ENCODE measurements at regions of chrX and their contacts with region 1.

Region 1: GRCh38 chrX:123422877-123423276 is 238.8 kb downstream of the GRIA3 start:
- DNase-seq: no peak
- ATAC-seq: peak; percentile 75
- H3K4me3 ChIP-seq: no peak overlapping the region
- H3K27ac ChIP-seq: no peak overlapping the region
- H3K4me1 ChIP-seq: peaks cover 0 to 6% of the 10 kb centered on the region in 2 donors
- H3K27me3 ChIP-seq: no peaks in the 10 kb centered on the region

Region 2: DNA sequence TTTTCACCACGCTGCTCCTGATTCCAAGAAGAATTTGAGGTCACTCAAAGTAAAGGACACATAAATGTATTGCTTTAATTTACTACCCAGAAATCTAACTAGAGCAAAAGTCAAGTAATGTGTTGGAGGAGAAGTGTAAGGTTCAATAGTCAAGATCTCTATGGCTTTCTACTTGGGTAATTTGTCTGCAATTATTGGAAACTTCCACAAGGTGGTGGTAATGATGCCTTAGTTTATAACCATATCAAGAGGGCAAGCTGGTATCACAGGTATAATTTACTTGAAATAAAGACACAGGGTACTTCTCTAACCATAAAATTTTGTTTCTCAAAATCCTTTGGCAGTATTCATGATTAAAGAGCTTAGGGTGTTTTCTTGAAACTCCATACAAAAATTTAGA is 249.0 kb before region 1 on chrX:
- intact Hi-C with region 1: loop called in 1 of 2 experiments (anchors 5 kb)
- DNase-seq: no peak
- ATAC-seq: no peak
- H3K4me3 ChIP-seq: no peak overlapping the region
- H3K27ac ChIP-seq: no peak overlapping the region
- H3K4me1 ChIP-seq: no peaks in the 10 kb centered on the region
- H3K27me3 ChIP-seq: no peaks in the 10 kb centered on the region

Region 3: DNA sequence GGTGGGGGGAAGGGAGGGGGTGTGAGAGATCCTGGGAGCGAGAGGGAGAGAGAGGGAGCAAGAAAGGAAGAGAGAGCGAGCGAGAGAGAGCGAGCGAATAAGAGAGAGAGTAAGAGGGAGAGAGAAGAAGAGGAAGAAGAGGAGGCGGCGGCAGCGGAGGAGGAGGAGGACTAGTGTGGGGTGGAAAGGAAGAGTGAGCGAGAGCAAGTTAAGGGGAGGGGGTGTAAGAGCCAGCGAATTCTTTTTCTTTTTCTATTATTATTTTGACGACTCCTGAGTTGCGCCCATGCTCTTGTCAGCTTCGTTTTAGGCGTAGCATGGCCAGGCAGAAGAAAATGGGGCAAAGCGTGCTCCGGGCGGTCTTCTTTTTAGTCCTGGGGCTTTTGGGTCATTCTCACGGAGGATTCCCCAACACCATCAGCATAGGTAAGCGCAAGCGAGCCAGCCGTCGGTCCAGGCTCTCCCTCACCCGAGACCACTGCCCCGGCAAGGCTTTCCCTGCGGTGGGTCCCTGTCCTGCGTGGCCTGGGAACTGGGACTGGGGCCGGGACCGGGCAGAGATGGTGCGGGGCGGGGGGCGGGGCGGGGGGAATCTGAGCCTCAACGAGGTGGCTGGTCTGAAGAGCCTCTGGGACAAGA is 238.5 kb before region 1 on chrX and contains the start of gene GRIA3:
- intact Hi-C with region 1: loop called in 1 of 2 experiments (anchors 5 kb)
- DNase-seq: peak; percentile 44 to 73
- ATAC-seq: peak; percentile 49
- H3K4me3 ChIP-seq: peak within 1 kb of the TSS; percentile 51 to 80
- H3K27ac ChIP-seq: no peak within 1 kb of the TSS
- H3K4me1 ChIP-seq: no peaks in the 10 kb centered on the region
- H3K27me3 ChIP-seq: no peaks in the 10 kb centered on the region
- total RNA-seq, gene GRIA3: 7.2 to 12.4 TPM

Measured in aorta (tissue), 5 donors.